H1 (cell line): ENCODE measurements at regions of chr14 and their contacts with region 1.

Region 1: DNA sequence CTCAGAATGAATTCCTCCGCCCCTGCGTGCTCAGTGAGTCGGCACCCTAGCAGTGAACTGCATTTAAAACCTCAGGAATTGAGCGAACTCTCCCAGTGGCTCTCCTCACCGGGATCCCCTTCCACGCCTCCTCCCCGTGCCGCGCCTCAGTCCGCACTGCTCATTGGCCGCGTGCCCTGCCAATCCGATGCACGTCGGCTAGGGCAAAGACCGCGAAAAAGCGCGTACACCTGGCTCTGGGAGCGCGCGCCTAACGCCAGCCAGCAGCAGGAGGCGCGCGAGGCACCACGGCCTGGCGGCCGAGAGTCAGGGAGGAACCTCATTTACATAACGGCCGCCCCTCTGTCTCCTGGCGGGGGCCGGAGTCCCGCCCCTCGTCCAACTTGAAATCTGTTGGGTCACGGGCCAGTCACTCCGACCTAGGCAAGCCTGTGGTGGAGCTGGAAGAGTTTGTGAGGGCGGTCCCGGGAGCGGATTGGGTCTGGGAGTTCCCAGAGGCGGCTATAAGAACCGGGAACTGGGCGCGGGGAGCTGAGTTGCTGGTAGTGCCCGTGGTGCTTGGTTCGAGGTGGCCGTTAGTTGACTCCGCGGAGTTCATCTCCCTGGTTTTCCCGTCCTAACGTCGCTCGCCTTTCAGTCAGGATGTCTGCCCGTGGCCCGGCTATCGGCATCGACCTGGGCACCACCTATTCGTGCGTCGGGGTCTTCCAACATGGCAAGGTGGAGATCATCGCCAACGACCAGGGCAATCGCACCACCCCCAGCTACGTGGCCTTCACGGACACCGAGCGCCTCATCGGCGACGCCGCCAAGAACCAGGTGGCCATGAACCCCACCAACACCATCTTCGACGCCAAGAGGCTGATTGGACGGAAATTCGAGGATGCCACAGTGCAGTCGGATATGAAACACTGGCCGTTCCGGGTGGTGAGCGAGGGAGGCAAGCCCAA is at the start of gene HSPA2:
- DNase-seq: peak; percentile 98 to 99
- H3K4me3 ChIP-seq: peak within 1 kb of the TSS; percentile 47 to 75 (median 58)
- H3K27ac ChIP-seq: peak within 1 kb of the TSS; percentile 90
- H3K4me1 ChIP-seq: peaks cover 0 to 21% (median 3%) of the 10 kb centered on the region in 4 experiments; a peak in 4 of 7 replicates
- H3K27me3 ChIP-seq: peaks cover 0 to 3% (median 0%) of the 10 kb centered on the region in 4 experiments; a peak in 1 of 7 replicates
- CTCF ChIP-seq: peak; percentile 73 to 85 (median 83)
- EP300 ChIP-seq: no peak
- POLR2A ChIP-seq: peak; percentile 79 to 97
- RAD21 ChIP-seq: peak; percentile 63 to 73
- total RNA-seq, gene HSPA2: 82.9 and 91.1 TPM in 2 replicates

Region 2: DNA sequence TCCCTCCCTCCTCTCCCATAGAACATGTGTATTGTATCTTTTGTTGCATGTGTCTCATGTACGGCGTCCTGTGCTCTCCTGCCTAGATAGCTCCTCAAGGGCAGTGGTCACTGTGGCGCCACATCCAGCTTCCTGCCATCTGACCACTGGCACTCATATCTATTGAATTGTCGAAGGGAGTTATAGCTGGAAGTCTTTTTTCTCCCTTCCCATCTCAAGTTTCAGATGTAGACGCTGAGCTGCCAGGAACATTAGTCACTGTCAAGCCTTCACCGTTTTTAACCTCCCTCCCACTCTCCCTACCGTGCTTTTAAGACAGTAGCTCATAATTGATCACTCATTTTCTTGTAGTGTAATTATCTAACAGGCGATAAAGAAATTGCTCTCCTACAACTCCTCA is 119.3 kb before region 1 on chr14:
- CTCF ChIA-PET with region 1: no interaction called
- POLR2A ChIA-PET with region 1: no interaction called
- DNase-seq: no peak
- H3K4me3 ChIP-seq: no peak overlapping the region
- H3K27ac ChIP-seq: no peak overlapping the region
- H3K4me1 ChIP-seq: no peaks in the 10 kb centered on the region
- H3K27me3 ChIP-seq: no peaks in the 10 kb centered on the region
- CTCF ChIP-seq: no peak
- EP300 ChIP-seq: no peak
- POLR2A ChIP-seq: no peak
- RAD21 ChIP-seq: no peak

Region 3: DNA sequence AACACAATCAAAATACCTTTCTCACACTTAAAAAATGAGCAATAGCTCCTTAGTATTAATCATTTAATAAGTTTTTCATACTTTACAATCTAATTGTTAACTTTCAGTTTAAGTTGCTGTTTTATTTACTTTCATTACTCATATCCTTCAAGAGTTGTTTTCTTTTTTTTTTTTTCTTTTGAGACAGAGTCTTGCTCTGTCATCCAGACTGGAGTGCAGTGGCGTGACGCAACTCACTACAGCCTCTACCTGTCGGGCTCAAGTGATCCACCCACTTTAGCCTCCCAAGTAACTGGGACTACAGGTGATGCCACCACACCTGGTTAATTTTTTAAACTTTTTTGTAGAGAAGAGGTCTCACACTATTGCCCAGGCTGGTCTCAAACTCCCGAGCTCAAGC is 19.8 kb before region 1 on chr14:
- CTCF ChIA-PET with region 1: interaction called, 5 read pairs
- POLR2A ChIA-PET with region 1: interaction called, 27 read pairs
- DNase-seq: no peak
- H3K4me3 ChIP-seq: no peak overlapping the region
- H3K27ac ChIP-seq: no peak overlapping the region
- H3K4me1 ChIP-seq: no peaks in the 10 kb centered on the region
- H3K27me3 ChIP-seq: no peaks in the 10 kb centered on the region
- CTCF ChIP-seq: no peak
- EP300 ChIP-seq: no peak
- POLR2A ChIP-seq: no peak
- RAD21 ChIP-seq: no peak

Region 4: GRCh38 chr14:64556526-64556925 is 16.0 kb after region 1 on chr14:
- CTCF ChIA-PET with region 1: interaction called, 10 read pairs
- POLR2A ChIA-PET with region 1: interaction called, 35 read pairs
- DNase-seq: no peak
- H3K4me3 ChIP-seq: no peak overlapping the region
- H3K27ac ChIP-seq: no peak overlapping the region
- H3K4me1 ChIP-seq: no peaks in the 10 kb centered on the region; a peak in 2 of 7 replicates
- H3K27me3 ChIP-seq: no peaks in the 10 kb centered on the region
- CTCF ChIP-seq: no peak
- EP300 ChIP-seq: no peak
- POLR2A ChIP-seq: no peak
- RAD21 ChIP-seq: no peak

Region 5: DNA sequence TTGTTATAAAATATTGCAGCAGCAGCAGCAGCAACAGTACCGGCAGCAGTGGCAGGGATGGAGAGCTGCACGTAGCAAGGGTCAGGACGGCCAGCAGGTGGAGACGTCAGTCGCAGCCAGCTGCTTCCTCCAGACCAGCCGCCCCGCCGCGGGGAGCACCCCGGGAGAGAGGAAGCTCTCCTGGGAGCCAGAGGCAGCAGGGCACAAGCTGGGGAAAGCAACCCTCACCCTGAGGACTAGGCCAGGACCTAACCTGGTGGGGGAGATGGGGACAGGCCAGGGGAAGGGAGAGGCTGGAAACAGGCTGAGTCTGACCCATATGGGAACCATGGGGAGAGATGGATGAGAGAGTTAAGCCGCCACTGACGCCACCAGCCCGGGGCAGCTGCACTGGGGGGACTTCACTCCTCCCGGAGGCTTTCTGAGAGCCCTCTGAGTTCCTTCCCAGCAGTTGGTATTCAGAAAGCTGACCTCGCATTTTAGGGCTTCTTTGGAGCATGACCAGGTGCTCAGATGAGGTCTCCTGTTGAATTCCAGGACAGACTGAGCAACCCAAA is 282.9 kb after region 1 on chr14:
- CTCF ChIA-PET with region 1: no interaction called
- POLR2A ChIA-PET with region 1: no interaction called
- DNase-seq: peak; percentile 41 to 86
- H3K4me3 ChIP-seq: no peak overlapping the region
- H3K27ac ChIP-seq: no peak overlapping the region
- H3K4me1 ChIP-seq: peaks cover 0 to 13% (median 5%) of the 10 kb centered on the region in 4 experiments; a peak in 4 of 7 replicates
- H3K27me3 ChIP-seq: no peaks in the 10 kb centered on the region; a peak in 1 of 7 replicates
- CTCF ChIP-seq: peak; percentile 78 to 98 (median 82)
- EP300 ChIP-seq: no peak
- POLR2A ChIP-seq: no peak
- RAD21 ChIP-seq: peak; percentile 83 to 85